Activated T-helper 1 cell treated with anti-CD3 and anti-CD28 coated beads, Interleukin-12 subunit alpha, Interleukin-12 subunit beta, Interleukin-2, Interleukin-4 antibody, amounts not matched to agents 30 ng/mL and 10 ng/mL and 1 ng/mL, durations not matched to agents 14 hours and 24 hours and 36 hours (primary cell): ENCODE measurements at regions of chr14 and their contacts with region 1.

Region 1: GRCh38 chr14:106308839-106309389 is 782.5 kb downstream of the TMEM121 start:
- DNase-seq: peak; percentile 88
- H3K4me3 Mint-ChIP-seq: no peak overlapping the region
- H3K27ac Mint-ChIP-seq: peak overlapping the region; percentile 37
- H3K4me1 Mint-ChIP-seq: no peaks in the 10 kb centered on the region
- H3K27me3 Mint-ChIP-seq: peaks cover 16% of the 10 kb centered on the region

Region 2: DNA sequence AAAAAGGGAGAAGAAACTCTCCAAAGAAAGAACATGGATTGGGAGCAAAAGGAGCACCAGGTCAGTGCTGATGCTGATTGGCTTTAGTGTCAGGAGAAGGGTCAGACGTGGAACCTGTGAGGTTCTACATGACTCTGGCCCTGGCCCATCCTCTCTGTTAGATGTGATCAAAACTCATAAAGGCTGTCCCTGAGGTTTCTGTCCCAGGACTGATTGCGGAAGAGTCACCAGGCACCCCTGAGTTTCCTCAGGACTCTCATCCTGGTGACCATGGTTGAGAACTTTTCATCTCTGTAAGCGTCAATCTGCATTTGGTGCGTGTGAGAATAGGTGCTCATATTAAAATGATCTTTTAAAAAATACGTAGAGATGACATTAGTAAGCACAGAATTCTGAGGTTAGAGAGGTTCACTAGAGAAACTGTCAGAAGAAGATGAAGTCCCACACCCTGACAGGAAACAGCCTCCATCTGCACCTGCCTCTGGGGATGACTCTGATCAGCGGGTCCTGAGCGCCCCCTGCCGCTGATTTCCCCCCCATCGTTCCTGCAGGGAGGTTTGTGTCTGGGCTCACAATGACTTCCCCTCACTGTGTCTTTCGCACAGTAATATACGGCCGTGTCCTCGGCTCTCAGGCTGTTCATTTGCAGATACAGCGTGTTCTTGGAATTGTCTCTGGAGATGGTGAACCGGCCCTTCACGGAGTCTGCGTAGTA is 40.7 kb before region 1 on chr14:
- intact Hi-C with region 1: loop called (anchors 1 kb)
- DNase-seq: peak; percentile 69
- H3K4me3 Mint-ChIP-seq: no peak overlapping the region
- H3K27ac Mint-ChIP-seq: no peak overlapping the region
- H3K4me1 Mint-ChIP-seq: peaks cover 11% of the 10 kb centered on the region
- H3K27me3 Mint-ChIP-seq: peaks cover 53% of the 10 kb centered on the region

Region 3: DNA sequence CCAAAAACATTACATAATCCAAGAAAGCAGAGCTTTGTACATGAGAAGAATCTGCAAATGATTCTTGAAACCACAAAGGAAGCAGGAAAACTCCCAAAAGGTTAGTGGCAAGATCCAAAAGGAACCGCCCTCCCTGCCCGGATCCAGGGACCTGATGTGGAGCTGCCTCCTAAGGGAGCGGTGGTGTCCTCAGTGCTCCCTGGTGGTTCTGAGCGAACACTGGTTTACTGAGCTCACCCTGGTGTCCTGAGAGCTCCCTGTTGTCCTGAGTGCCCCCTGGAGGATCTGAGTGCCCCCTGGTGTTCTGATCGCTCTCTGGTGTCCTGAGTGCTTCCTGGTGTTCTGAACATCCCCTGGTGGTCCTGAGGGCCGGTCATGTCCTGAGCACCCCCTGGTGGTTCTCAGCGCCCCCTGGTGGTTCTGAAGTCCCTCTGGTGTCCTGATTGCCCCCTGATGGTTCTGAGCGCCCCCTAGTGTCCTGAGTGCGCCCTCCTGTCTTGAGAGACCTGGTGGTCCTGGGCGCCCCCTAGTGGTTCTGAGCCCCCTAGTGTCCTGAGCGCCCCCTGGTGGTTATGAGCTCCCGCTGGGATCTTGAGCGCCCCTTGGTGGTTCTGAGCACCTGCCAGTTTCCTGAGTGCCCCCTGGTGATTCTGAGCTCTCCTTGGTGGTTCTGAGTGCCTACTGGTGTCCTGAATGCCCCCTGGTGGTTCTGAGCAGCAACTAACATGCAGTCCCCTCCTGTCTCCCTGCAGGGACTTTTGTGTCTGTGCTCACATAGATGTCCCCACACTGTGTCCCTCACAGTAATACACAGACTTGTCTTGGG is 108.5 kb after region 1 on chr14:
- intact Hi-C with region 1: loop called (anchors 1 kb)
- DNase-seq: peak; percentile 86
- H3K4me3 Mint-ChIP-seq: no peak overlapping the region
- H3K27ac Mint-ChIP-seq: no peak overlapping the region
- H3K4me1 Mint-ChIP-seq: peaks cover 15% of the 10 kb centered on the region
- H3K27me3 Mint-ChIP-seq: peaks cover 9% of the 10 kb centered on the region

Region 4: GRCh38 chr14:106662936-106663550 is 354.1 kb after region 1 on chr14:
- intact Hi-C with region 1: loop called (anchors 5 kb)
- DNase-seq: no peak
- H3K4me3 Mint-ChIP-seq: no peak overlapping the region
- H3K27ac Mint-ChIP-seq: no peak overlapping the region
- H3K4me1 Mint-ChIP-seq: peaks cover 14% of the 10 kb centered on the region
- H3K27me3 Mint-ChIP-seq: peaks cover 32% of the 10 kb centered on the region